PC-3 (cell line): ENCODE measurements at regions of chr1 and their contacts with region 1.

Region 1: GRCh38 chr1:53959664-53960250 is 13.6 kb downstream of the LRRC42 start:
- DNase-seq: peak; percentile 70
- ATAC-seq: no peak; the same call in 1 of the 2 replicates
- H3K4me3 ChIP-seq: no peak overlapping the region
- H3K27ac ChIP-seq: no peak overlapping the region
- H3K4me1 ChIP-seq: peaks cover 21% of the 10 kb centered on the region
- H3K27me3 ChIP-seq: no peaks in the 10 kb centered on the region
- CTCF ChIP-seq: peak; percentile 81

Region 2: DNA sequence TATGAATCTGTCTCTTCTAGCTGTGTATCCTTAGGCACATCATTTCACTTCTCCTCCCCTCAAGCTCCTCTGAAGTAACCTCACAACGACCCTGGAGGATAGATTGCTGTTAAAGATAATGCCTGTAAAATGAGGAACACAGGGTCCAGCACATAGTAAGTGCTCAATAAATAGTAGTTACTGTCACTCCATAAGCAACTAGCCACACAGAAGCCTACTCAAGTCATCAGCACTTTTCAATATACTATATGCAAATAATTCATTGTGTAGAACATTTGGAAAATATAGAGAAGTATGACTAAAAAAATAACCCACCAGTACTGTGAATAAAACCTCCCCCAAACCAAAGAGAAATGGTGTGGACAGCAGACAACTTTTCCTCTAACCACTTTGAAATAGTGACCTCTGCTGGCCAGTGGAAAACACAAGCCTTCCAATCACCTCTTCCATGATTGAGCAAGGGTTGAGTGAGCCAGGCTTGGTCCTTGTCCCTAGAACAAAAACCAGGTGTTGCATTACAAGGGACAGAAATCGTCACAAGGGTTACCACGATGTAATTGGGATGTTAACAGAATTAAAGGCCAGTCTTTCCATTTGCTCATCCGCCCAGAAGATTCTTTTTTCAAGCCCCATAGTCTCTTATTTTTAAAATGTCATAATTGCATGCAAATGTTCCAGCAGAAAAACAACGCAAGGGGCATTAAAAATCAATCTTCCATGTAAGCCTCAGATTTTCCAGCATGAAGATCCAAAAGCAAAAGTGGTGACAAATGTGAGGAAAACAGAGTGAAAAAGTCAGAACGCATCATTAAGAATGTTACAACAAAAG is 205.1 kb before region 1 on chr1:
- CTCF ChIA-PET with region 1: no interaction called
- POLR2A ChIA-PET with region 1: no interaction called
- intact Hi-C with region 1: no loop called
- DNase-seq: peak; percentile 82
- ATAC-seq: peak; percentile 88
- H3K4me3 ChIP-seq: no peak overlapping the region
- H3K27ac ChIP-seq: no peak overlapping the region
- H3K4me1 ChIP-seq: no peaks in the 10 kb centered on the region
- H3K27me3 ChIP-seq: no peaks in the 10 kb centered on the region
- CTCF ChIP-seq: peak; percentile 91

Region 3: GRCh38 chr1:53826367-53826766 is 133.4 kb before region 1 on chr1:
- CTCF ChIA-PET with region 1: interaction called, 10 read pairs
- POLR2A ChIA-PET with region 1: no interaction called
- intact Hi-C with region 1: no loop called
- DNase-seq: no peak
- ATAC-seq: peak; percentile 61
- H3K4me3 ChIP-seq: no peak overlapping the region
- H3K27ac ChIP-seq: no peak overlapping the region
- H3K4me1 ChIP-seq: no peaks in the 10 kb centered on the region
- H3K27me3 ChIP-seq: no peaks in the 10 kb centered on the region
- CTCF ChIP-seq: peak; percentile 53

Region 4: DNA sequence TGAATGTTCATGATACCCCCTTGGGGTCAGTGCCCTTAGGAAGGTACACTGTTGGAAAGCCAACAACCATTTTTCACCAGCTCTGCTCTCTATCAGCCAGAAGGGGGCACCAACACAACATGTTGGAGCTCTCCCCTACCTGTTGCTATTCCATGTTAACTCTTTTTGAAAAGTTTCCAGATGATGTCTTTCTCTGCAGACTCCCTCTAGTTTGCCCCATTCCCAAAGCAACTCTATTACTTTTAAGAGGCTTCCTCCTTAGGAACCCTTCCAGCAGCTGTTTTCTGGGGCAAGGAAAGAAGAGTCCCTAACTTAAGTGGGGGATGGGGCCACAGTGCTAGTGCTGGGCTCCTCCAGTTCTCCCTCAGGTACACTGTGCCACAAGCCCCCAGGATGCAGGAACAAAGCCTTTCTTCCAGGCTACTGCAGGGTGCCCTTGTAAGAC is 98.8 kb before region 1 on chr1:
- CTCF ChIA-PET with region 1: interaction called, 5 read pairs
- POLR2A ChIA-PET with region 1: no interaction called
- intact Hi-C with region 1: loop called (anchors 1 kb)
- DNase-seq: peak; percentile 78
- ATAC-seq: peak; percentile 90
- H3K4me3 ChIP-seq: no peak overlapping the region
- H3K27ac ChIP-seq: no peak overlapping the region
- H3K4me1 ChIP-seq: no peaks in the 10 kb centered on the region
- H3K27me3 ChIP-seq: no peaks in the 10 kb centered on the region
- CTCF ChIP-seq: peak; percentile 93

Region 5: DNA sequence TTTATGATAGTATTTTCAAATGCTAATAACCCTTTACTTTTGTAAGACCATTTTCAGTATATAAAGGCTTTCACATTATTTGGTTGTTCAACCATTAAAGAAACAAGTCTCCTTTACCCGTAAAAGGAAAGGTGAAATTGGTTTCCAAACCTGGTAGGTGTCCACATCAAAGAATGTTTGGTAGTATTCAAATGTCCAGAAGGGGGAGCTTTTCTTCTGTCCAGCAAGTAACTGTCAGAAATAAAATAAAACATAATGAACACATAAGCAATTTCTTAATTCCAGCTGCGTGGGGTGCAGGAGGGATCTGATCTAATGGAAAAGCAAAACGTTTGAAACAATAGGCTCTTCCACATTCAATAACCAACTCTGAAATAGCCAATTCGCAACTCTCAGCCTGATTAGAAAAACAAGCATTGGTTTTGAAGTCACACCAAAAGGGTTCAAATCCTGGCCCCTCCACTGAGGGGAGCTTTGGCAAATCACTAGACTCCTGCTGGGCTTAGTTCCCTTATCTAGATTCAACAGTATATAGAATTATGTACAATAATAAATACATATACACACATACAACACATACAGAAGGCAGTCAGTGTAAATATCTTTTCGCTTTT is 81.2 kb before region 1 on chr1:
- CTCF ChIA-PET with region 1: interaction called, 6 read pairs
- POLR2A ChIA-PET with region 1: no interaction called
- intact Hi-C with region 1: loop called (anchors 1 kb)
- DNase-seq: peak; percentile 76
- ATAC-seq: peak; percentile 54
- H3K4me3 ChIP-seq: no peak overlapping the region
- H3K27ac ChIP-seq: no peak overlapping the region
- H3K4me1 ChIP-seq: no peaks in the 10 kb centered on the region
- H3K27me3 ChIP-seq: no peaks in the 10 kb centered on the region
- CTCF ChIP-seq: peak; percentile 89

Region 6: DNA sequence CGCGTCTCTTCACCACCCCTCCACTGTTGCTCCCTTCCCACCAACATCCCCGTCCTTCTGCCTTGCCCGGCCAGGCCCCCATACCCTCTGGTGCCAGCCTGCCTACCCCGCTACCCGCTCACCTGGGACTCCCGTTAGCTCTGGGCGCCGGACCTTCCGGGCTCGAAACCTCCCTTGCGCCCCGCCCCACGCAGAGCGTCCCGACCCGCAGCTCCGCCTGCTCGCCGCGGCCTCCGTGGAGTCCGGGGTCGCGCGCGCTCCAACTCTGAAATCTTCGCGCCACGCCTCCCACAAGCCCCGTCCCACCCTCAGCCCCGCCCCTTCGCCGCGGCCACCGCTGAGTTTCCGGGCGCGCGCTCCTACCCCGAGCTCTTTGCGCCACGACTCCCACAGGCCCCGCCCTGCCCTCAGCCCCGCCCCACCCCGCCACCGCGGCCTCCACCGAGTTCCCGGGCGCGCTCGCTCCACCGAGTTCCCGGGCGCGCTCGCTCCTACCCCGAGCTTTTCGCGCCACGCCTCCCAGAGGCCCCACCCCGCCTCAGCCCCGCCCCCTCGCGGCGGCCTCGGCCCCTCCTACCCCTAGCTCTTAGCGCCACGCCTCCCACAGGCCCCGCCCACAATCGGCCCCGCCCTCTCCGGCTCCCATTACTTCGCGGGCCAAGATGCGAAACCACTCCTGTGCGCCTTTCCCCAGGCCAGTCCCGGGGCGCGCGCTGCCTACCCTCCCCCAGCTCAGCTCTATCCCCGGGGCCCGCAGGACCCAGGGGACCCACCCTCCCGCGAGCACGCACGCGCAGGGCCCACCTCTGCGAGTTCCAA is 14.1 kb before region 1 on chr1 and contains the start of gene IFT25:
- CTCF ChIA-PET with region 1: interaction called, 20 read pairs
- POLR2A ChIA-PET with region 1: no interaction called
- intact Hi-C with region 1: no loop called
- DNase-seq: peak; percentile 95
- ATAC-seq: peak; percentile 74
- H3K4me3 ChIP-seq: peak within 1 kb of the TSS; percentile 96
- H3K27ac ChIP-seq: peak within 1 kb of the TSS; percentile 23; the same call in 1 of the 2 replicates
- H3K4me1 ChIP-seq: peaks cover 46% of the 10 kb centered on the region
- H3K27me3 ChIP-seq: no peaks in the 10 kb centered on the region
- CTCF ChIP-seq: no peak
- total RNA-seq, gene IFT25: 49.7 and 66.7 TPM in 2 replicates

Region 7: GRCh38 chr1:54094001-54094729 is 134.4 kb after region 1 on chr1:
- CTCF ChIA-PET with region 1: no interaction called
- POLR2A ChIA-PET with region 1: interaction called, 25 read pairs
- intact Hi-C with region 1: no loop called
- DNase-seq: peak; percentile 51
- ATAC-seq: peak; percentile 98
- H3K4me3 ChIP-seq: no peak overlapping the region
- H3K27ac ChIP-seq: peak overlapping the region; percentile 37; the same call in 1 of the 2 replicates
- H3K4me1 ChIP-seq: peaks cover 12% of the 10 kb centered on the region
- H3K27me3 ChIP-seq: no peaks in the 10 kb centered on the region
- CTCF ChIP-seq: no peak

Region 8: GRCh38 chr1:54904476-54905048 is 944.8 kb after region 1 on chr1:
- CTCF ChIA-PET with region 1: no interaction called
- POLR2A ChIA-PET with region 1: no interaction called
- intact Hi-C with region 1: no loop called
- DNase-seq: peak; percentile 83
- ATAC-seq: peak; percentile 98
- H3K4me3 ChIP-seq: no peak overlapping the region
- H3K27ac ChIP-seq: peak overlapping the region; percentile 71
- H3K4me1 ChIP-seq: peaks cover 19% of the 10 kb centered on the region
- H3K27me3 ChIP-seq: no peaks in the 10 kb centered on the region
- CTCF ChIP-seq: no peak